ENCODE measurements at regions of chr14 and their contacts with region 1.

Region 1: GRCh38 chr14:105490572-105491366 is at the start of gene TEDC1:
- DNase-seq: peak; percentile 99 to 100 (median 100)
- H3K4me3 ChIP-seq: peak within 1 kb of the TSS in 1 of 2 donors; percentile 79
- H3K4me3 Mint-ChIP-seq: peak within 1 kb of the TSS; percentile 85 to 94 (median 88)
- H3K27ac ChIP-seq: peak within 1 kb of the TSS; percentile 97
- H3K27ac Mint-ChIP-seq: peak within 1 kb of the TSS; percentile 91 to 99 (median 99)
- H3K4me1 ChIP-seq: peaks cover 33% of the 10 kb centered on the region
- H3K4me1 Mint-ChIP-seq: peaks cover 8 to 49% (median 19%) of the 10 kb centered on the region in 4 donors
- H3K27me3 ChIP-seq: no peaks in the 10 kb centered on the region
- H3K27me3 Mint-ChIP-seq: no peaks in the 10 kb centered on the region
- total RNA-seq, gene TEDC1: 25.4 to 30.2 TPM

Region 2: GRCh38 chr14:105020815-105021655 is 469.7 kb before region 1 on chr14 and contains the start of gene CDCA4:
- CTCF ChIA-PET with region 1: no interaction called
- POLR2A ChIA-PET with region 1: no interaction called
- intact Hi-C with region 1: loop called (anchors 2 kb)
- DNase-seq: peak; percentile 94 to 98 (median 97)
- H3K4me3 ChIP-seq: peak within 1 kb of the TSS; percentile 69 to 71
- H3K4me3 Mint-ChIP-seq: peak within 1 kb of the TSS; percentile 92 to 98 (median 94)
- H3K27ac ChIP-seq: peak within 1 kb of the TSS; percentile 75
- H3K27ac Mint-ChIP-seq: peak within 1 kb of the TSS; percentile 94 to 97 (median 96)
- H3K4me1 ChIP-seq: peaks cover 72% of the 10 kb centered on the region
- H3K4me1 Mint-ChIP-seq: peaks cover 29 to 84% (median 57%) of the 10 kb centered on the region in 4 donors
- H3K27me3 ChIP-seq: no peaks in the 10 kb centered on the region
- H3K27me3 Mint-ChIP-seq: peaks cover 0 to 1% of the 10 kb centered on the region in 2 donors
- total RNA-seq, gene CDCA4: 17.1 to 19.0 TPM

Region 3: GRCh38 chr14:105203057-105203531 is 287.7 kb before region 1 on chr14:
- CTCF ChIA-PET with region 1: no interaction called
- POLR2A ChIA-PET with region 1: no interaction called
- intact Hi-C with region 1: loop called (anchors 1 kb)
- DNase-seq: peak; percentile 49 to 63 (median 53)
- H3K4me3 ChIP-seq: no peak overlapping the region
- H3K4me3 Mint-ChIP-seq: no peak overlapping the region
- H3K27ac ChIP-seq: no peak overlapping the region
- H3K27ac Mint-ChIP-seq: peak overlapping the region in 1 of 7 donors; percentile 40
- H3K4me1 ChIP-seq: peaks cover 21% of the 10 kb centered on the region
- H3K4me1 Mint-ChIP-seq: peaks cover 3 to 22% (median 13%) of the 10 kb centered on the region in 4 donors
- H3K27me3 ChIP-seq: no peaks in the 10 kb centered on the region
- H3K27me3 Mint-ChIP-seq: peaks cover 11 to 14% of the 10 kb centered on the region in 2 donors

Region 4: DNA sequence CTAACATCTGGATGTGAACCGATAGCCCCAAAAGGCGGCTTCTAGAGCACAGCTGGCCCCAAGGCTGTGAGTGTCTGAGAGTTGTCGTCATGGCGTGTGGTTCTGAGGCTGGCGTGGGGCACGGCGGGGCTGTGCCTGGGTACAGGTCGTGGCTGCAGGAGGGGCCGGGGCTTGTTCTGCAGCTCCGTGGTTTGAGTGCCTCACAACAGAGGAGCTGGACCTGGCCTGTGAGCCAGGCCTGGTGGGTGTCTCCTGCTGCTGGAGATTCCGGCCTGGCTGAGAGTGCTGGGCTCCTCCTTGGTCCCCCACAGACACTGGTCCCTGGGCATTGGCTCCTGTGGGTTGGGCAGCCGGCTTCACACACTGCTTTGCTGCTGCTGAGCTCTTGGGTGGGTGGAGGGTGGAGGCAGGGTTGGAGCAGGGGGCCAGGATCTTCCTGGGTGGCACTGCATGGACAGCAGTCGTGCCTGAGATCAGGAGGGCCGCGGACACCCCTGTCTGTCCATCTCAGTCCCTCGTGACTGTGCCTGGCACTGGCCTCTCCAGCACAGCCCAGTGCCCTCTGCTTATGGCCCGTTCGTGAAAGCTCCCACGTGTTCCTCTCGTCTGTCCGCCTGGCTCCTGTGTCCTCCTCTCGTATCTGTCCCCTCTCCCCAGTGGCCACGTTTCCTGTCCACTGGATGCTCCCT is 124.2 kb before region 1 on chr14:
- CTCF ChIA-PET with region 1: interaction called, 94 read pairs
- POLR2A ChIA-PET with region 1: interaction called, 56 read pairs
- intact Hi-C with region 1: loop called (anchors 1 kb)
- DNase-seq: no peak
- H3K4me3 ChIP-seq: no peak overlapping the region
- H3K4me3 Mint-ChIP-seq: no peak overlapping the region
- H3K27ac ChIP-seq: no peak overlapping the region
- H3K27ac Mint-ChIP-seq: no peak overlapping the region
- H3K4me1 ChIP-seq: peaks cover 8% of the 10 kb centered on the region
- H3K4me1 Mint-ChIP-seq: peaks cover 9 to 17% (median 13%) of the 10 kb centered on the region in 4 donors
- H3K27me3 ChIP-seq: no peaks in the 10 kb centered on the region
- H3K27me3 Mint-ChIP-seq: no peaks in the 10 kb centered on the region

Region 5: GRCh38 chr14:105414456-105415371 is 76.1 kb before region 1 on chr14:
- CTCF ChIA-PET with region 1: interaction called, 9 read pairs
- POLR2A ChIA-PET with region 1: interaction called, 5 read pairs
- intact Hi-C with region 1: loop called (anchors 1 kb)
- DNase-seq: peak; percentile 55 to 65 (median 61)
- H3K4me3 ChIP-seq: peak overlapping the region in 1 of 2 donors; percentile 51
- H3K4me3 Mint-ChIP-seq: peak overlapping the region; percentile 70 to 82 (median 78)
- H3K27ac ChIP-seq: no peak overlapping the region
- H3K27ac Mint-ChIP-seq: peak overlapping the region in 1 of 7 donors; percentile 42
- H3K4me1 ChIP-seq: peaks cover 25% of the 10 kb centered on the region
- H3K4me1 Mint-ChIP-seq: peaks cover 1 to 32% (median 13%) of the 10 kb centered on the region in 4 donors
- H3K27me3 ChIP-seq: peaks cover 27% of the 10 kb centered on the region
- H3K27me3 Mint-ChIP-seq: peaks cover 3 to 7% of the 10 kb centered on the region in 2 donors

Region 6: GRCh38 chr14:105527661-105528581 is 37.2 kb after region 1 on chr14:
- CTCF ChIA-PET with region 1: interaction called, 9 read pairs
- POLR2A ChIA-PET with region 1: interaction called, 48 read pairs
- intact Hi-C with region 1: loop called (anchors 1 kb)
- DNase-seq: peak; percentile 69 to 83 (median 78)
- H3K4me3 ChIP-seq: peak overlapping the region in 1 of 2 donors; percentile 54
- H3K4me3 Mint-ChIP-seq: peak overlapping the region; percentile 27 to 84 (median 66)
- H3K27ac ChIP-seq: no peak overlapping the region
- H3K27ac Mint-ChIP-seq: peak overlapping the region in 4 of 7 donors; percentile 43 to 83 (median 57)
- H3K4me1 ChIP-seq: peaks cover 29% of the 10 kb centered on the region
- H3K4me1 Mint-ChIP-seq: peaks cover 4 to 41% (median 19%) of the 10 kb centered on the region in 4 donors
- H3K27me3 ChIP-seq: no peaks in the 10 kb centered on the region
- H3K27me3 Mint-ChIP-seq: peaks cover 1 to 2% of the 10 kb centered on the region in 2 donors

Region 7: GRCh38 chr14:105538165-105539049 is 47.6 kb after region 1 on chr14:
- CTCF ChIA-PET with region 1: no interaction called
- POLR2A ChIA-PET with region 1: no interaction called
- intact Hi-C with region 1: no loop called
- DNase-seq: peak in 4 of 5 donors; percentile 36 to 81 (median 44)
- H3K4me3 ChIP-seq: no peak overlapping the region
- H3K4me3 Mint-ChIP-seq: peak overlapping the region in 3 of 8 donors; percentile 25 to 52 (median 43)
- H3K27ac ChIP-seq: no peak overlapping the region
- H3K27ac Mint-ChIP-seq: peak overlapping the region in 2 of 7 donors; percentile 78 to 80
- H3K4me1 ChIP-seq: peaks cover 7% of the 10 kb centered on the region
- H3K4me1 Mint-ChIP-seq: peaks cover 0 to 3% (median 1%) of the 10 kb centered on the region in 4 donors
- H3K27me3 ChIP-seq: no peaks in the 10 kb centered on the region
- H3K27me3 Mint-ChIP-seq: peaks cover 2 to 13% of the 10 kb centered on the region in 2 donors